CD8-positive, alpha-beta T cell (primary cell): ENCODE measurements at regions of chr5 and their contacts with region 1.

Region 1: DNA sequence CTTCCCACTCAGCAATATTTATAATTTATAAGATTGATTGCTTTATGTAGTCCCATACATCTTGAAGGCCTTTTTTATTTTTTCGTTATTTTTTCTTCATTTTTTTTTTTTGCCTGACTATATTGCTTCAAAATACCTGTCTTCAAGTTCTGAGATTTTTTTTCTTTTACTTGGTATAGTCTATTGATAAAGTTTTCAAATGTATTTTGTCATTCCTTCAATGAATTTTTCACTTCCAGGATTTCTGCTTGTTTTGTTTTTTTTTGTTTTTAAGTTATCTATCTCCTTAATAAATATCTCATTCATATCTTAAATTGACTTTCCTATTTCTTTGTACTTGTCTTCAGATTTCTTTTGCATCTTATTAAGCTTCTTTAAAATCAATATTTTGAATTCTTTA is 905.6 kb upstream of the CDH6 start:
- DNase-seq: no peak
- ATAC-seq: no peak
- H3K4me3 ChIP-seq: no peak overlapping the region
- H3K4me3 Mint-ChIP-seq: no peak overlapping the region
- H3K27ac ChIP-seq: no peak overlapping the region
- H3K27ac Mint-ChIP-seq: no peak overlapping the region
- H3K4me1 ChIP-seq: no peaks in the 10 kb centered on the region
- H3K4me1 Mint-ChIP-seq: no peaks in the 10 kb centered on the region
- H3K27me3 ChIP-seq: no peaks in the 10 kb centered on the region
- H3K27me3 Mint-ChIP-seq: no peaks in the 10 kb centered on the region
- CTCF ChIP-seq: no peak

Region 2: GRCh38 chr5:29001665-29002064 is 1286.2 kb before region 1 on chr5:
- CTCF ChIA-PET with region 1: no interaction called
- POLR2A ChIA-PET with region 1: no interaction called
- intact Hi-C with region 1: loop called in 1 of 2 experiments (anchors 5 kb)
- DNase-seq: no peak
- ATAC-seq: no peak
- H3K4me3 ChIP-seq: no peak overlapping the region
- H3K4me3 Mint-ChIP-seq: no peak overlapping the region
- H3K27ac ChIP-seq: no peak overlapping the region
- H3K27ac Mint-ChIP-seq: no peak overlapping the region
- H3K4me1 ChIP-seq: no peaks in the 10 kb centered on the region
- H3K4me1 Mint-ChIP-seq: no peaks in the 10 kb centered on the region
- H3K27me3 ChIP-seq: no peaks in the 10 kb centered on the region
- H3K27me3 Mint-ChIP-seq: no peaks in the 10 kb centered on the region
- CTCF ChIP-seq: no peak